ENCODE measurements at regions of chr5 and their contacts with region 1.

Region 1: DNA sequence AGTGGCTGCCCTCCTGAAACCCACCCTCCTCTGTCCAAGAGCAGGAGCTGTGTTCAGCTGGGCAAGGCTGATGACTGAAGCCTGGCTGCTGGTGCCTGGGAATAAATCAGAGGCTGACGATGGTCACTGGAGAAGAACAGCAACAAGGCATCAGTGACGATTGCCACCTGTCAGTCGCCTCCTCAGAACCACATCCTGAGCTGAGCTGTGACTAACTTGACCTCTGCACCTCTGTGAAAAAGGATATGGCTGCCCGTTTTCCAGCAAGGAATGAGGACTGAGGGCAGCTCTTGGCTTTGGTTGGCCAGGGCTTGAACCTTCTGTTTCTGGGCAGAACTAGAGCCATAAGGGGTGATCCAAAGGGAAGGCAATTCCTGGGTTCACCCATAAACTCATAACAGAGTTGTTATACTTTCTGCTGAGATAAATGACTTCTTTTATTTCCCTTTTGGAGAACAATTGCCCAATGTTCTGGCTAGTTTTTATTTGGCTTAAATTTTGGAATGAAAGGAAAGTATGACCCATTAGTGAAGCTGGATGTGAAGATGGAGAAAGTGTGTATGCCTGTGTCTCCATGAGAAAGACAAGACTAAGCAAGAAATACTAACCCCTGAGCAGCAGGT is 40.1 kb downstream of the TRIP13 start:
- DNase-seq: no peak
- H3K4me3 ChIP-seq: no peak overlapping the region
- CTCF ChIP-seq: no peak

Region 2: GRCh38 chr5:969408-969839 is 36.7 kb after region 1 on chr5:
- CTCF ChIA-PET with region 1: no interaction called
- POLR2A ChIA-PET with region 1: no interaction called
- DNase-seq: no peak
- H3K4me3 ChIP-seq: no peak overlapping the region
- CTCF ChIP-seq: no peak

Region 3: GRCh38 chr5:1003296-1003937 is 70.7 kb after region 1 on chr5:
- CTCF ChIA-PET with region 1: no interaction called
- POLR2A ChIA-PET with region 1: no interaction called
- DNase-seq: no peak
- H3K4me3 ChIP-seq: no peak overlapping the region
- CTCF ChIP-seq: no peak

Region 4: DNA sequence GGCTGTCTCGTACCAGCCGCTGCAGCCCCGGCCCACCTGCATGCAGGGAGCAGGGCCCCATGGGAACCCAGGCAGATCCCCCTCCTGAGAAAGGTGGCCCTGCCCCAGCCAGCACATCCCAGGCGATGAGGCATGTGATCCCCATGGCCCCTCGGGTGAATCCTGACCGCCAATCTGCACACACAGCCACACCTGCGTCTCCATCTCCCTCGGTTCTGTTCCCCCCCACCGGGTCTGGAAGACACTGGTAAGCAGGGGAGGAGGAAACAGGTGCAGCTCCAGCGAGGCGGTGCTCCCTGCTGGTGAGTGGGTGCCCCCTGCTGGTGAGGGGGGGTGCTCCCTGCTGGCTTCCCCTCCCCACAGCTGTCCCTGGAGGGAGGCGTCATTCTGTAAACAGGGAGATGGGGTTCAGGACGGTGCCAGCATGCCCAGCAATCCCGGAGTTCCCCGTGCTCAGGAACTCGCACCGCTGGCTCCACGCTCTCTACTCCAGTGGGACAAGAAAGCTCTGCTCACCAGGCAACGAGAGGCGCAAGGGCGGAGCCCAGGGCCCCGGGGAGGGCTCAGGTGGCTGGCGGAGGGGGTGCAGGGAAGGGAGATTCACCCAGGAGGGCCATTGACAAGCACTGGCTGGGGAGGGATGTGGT is 207.6 kb after region 1 on chr5:
- CTCF ChIA-PET with region 1: interaction called, 20 read pairs
- POLR2A ChIA-PET with region 1: no interaction called
- DNase-seq: no peak
- H3K4me3 ChIP-seq: no peak overlapping the region
- CTCF ChIP-seq: peak; percentile 68

Region 5: GRCh38 chr5:1167728-1168709 is 235.3 kb after region 1 on chr5:
- CTCF ChIA-PET with region 1: interaction called, 52 read pairs
- POLR2A ChIA-PET with region 1: no interaction called
- DNase-seq: no peak
- H3K4me3 ChIP-seq: peak overlapping the region; percentile 12
- CTCF ChIP-seq: peak; percentile 80

Region 6: DNA sequence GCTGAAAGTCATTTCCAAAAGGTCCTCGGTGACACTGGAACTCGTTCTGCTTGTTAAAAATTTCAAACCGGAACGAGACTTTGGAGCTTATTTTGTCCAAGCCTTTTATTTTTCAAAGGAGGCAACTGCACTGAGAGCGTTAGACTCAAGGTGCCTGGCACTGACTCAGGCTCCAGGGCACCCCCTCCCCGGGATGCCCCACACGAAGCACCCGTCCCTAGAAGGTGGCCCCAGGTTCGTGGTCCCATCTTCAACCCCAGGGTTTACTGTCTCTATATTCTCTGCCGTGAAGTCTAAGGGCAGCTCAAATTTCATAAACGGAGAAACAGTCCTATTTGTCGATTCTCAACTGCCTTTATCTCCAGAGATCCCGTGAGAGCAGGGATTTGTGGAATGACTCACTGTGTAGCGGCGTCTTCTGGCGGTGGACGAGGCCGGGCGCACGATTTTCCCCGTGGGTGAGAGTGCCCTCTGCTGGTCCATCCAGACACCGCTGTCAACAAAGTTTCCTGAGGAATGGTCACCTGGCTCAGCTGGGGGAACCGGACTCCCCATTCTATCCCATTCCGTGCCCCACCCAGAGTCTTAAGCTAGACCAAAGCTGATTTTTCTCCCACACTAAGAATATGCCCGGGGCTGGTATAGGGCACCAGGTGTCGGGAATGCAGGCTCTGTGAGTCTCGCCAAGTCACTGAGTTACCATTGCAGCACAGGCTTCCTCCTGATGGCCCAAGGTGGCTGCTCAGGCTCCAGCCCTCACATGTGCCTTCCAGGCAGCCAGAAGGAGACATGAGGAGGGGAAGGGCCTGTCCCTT is 241.6 kb after region 1 on chr5:
- CTCF ChIA-PET with region 1: interaction called, 52 read pairs
- POLR2A ChIA-PET with region 1: no interaction called
- DNase-seq: no peak
- H3K4me3 ChIP-seq: no peak overlapping the region
- CTCF ChIP-seq: peak; percentile 64

Measured in AG04449 (cell line).